MCF 10A (cell line): ENCODE measurements at regions of chr19 and their contacts with region 1.

Region 1: DNA sequence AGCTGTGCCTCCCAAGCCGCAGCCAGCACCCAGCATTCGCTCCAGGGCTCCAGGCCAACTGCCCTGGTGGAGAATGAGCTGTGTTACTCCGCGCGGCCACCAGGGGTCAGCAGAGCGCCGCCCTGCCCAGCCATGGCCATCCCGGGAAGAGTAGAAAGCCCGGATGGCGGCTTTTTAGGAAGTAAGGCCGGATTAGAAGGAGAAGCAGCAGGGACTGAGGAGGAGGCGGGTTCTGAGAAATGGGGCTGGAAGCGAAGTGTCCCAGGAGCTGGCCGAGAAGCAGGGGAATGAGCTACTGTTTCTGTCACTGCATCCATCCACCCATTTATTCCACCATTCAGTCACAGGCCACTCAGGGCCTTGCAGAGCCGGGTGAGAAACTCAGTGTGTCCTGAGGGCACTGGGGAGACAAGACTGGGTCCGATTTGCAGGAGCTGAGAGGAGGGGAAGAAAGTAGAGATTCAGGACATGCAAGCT is 6.6 kb upstream of the NPAS1 start:
- DNase-seq: peak; percentile 87
- H3K4me3 Mint-ChIP-seq: peak overlapping the region; percentile 45
- H3K27ac Mint-ChIP-seq: no peak overlapping the region
- H3K4me1 Mint-ChIP-seq: peaks cover 12% of the 10 kb centered on the region
- H3K27me3 Mint-ChIP-seq: no peaks in the 10 kb centered on the region
- CTCF ChIP-seq: peak; percentile 93

Region 2: GRCh38 chr19:47002107-47002766 is 10.8 kb before region 1 on chr19:
- CTCF ChIA-PET with region 1: interaction called, 25 read pairs
- POLR2A ChIA-PET with region 1: interaction called, 3 read pairs
- intact Hi-C with region 1: no loop called
- DNase-seq: no peak
- H3K4me3 Mint-ChIP-seq: no peak overlapping the region
- H3K27ac Mint-ChIP-seq: no peak overlapping the region
- H3K4me1 Mint-ChIP-seq: no peaks in the 10 kb centered on the region
- H3K27me3 Mint-ChIP-seq: no peaks in the 10 kb centered on the region
- CTCF ChIP-seq: no peak

Region 3: GRCh38 chr19:47035127-47036096 is 22.3 kb after region 1 on chr19:
- CTCF ChIA-PET with region 1: interaction called, 31 read pairs
- POLR2A ChIA-PET with region 1: interaction called, 9 read pairs
- intact Hi-C with region 1: loop called (anchors 1 kb)
- DNase-seq: peak; percentile 95
- H3K4me3 Mint-ChIP-seq: peak overlapping the region; percentile 74
- H3K27ac Mint-ChIP-seq: peak overlapping the region; percentile 94
- H3K4me1 Mint-ChIP-seq: peaks cover 8% of the 10 kb centered on the region
- H3K27me3 Mint-ChIP-seq: no peaks in the 10 kb centered on the region
- CTCF ChIP-seq: peak; percentile 91

Region 4: DNA sequence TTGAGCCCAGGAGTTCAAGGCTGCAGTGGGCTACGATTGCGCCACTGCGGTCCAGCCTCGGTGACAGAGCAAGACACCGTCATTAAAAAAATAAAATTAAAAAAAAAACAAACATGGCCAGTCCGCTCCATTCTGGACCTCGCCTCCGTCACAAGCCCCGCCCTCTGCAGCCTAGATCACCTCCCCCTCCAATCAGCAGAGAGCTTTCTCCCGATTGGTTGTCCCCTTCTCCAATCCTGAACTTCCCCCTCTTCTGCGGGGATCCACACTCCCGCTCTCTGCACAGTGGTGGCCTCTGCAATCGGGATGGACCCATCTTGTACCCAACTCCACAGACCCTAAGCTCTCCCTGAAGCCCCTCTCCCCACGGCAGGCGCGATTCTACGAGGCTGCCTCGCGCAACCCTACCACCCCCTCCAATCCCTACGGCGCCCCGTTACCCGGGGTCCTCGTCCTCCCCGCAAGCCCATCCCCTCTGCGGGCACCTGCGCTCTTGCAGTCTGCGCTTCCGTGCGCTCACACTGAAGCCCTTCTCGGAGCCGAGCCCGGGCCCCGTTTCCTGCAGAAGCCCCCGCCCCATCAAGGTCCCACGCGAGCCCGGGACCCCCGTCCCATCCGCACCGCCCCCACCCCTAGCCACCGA is 34.8 kb after region 1 on chr19:
- CTCF ChIA-PET with region 1: no interaction called
- POLR2A ChIA-PET with region 1: no interaction called
- intact Hi-C with region 1: no loop called
- DNase-seq: peak; percentile 79
- H3K4me3 Mint-ChIP-seq: peak overlapping the region; percentile 86
- H3K27ac Mint-ChIP-seq: no peak overlapping the region
- H3K4me1 Mint-ChIP-seq: peaks cover 6% of the 10 kb centered on the region
- H3K27me3 Mint-ChIP-seq: no peaks in the 10 kb centered on the region
- CTCF ChIP-seq: no peak

Region 5: DNA sequence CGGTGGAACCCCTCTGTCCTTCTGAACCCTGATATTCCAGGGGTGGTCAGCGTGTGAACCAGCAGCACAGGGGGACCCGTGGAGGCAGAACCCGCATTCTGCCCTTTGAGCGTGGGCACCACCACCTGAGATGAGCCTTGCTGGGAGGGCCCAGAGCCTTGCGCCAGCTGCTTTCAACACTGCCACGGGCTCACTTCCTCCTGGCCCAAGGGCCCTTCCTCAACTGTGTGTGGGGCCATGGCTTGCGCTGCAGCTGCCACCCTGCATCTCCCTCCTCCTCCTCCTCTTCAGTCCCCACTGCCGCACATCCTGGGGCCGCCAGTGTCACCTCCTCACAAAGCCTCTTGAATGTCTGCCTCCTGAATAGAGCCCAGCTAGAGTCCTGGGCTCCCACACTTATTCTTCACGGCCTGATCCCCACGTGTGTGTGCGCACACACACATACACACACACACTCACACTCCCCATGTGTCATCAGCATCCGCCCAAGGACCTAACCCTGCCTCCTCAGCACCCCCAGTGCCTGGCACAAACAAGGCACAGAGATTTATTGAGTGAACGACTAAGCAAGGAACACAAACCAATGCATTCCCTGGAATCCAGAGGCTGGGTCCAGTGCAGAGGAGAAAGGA is 62.2 kb after region 1 on chr19:
- CTCF ChIA-PET with region 1: interaction called, 7 read pairs
- POLR2A ChIA-PET with region 1: no interaction called
- intact Hi-C with region 1: loop called (anchors 5 kb)
- DNase-seq: no peak
- H3K4me3 Mint-ChIP-seq: no peak overlapping the region
- H3K27ac Mint-ChIP-seq: no peak overlapping the region
- H3K4me1 Mint-ChIP-seq: no peaks in the 10 kb centered on the region
- H3K27me3 Mint-ChIP-seq: no peaks in the 10 kb centered on the region
- CTCF ChIP-seq: no peak

Region 6: DNA sequence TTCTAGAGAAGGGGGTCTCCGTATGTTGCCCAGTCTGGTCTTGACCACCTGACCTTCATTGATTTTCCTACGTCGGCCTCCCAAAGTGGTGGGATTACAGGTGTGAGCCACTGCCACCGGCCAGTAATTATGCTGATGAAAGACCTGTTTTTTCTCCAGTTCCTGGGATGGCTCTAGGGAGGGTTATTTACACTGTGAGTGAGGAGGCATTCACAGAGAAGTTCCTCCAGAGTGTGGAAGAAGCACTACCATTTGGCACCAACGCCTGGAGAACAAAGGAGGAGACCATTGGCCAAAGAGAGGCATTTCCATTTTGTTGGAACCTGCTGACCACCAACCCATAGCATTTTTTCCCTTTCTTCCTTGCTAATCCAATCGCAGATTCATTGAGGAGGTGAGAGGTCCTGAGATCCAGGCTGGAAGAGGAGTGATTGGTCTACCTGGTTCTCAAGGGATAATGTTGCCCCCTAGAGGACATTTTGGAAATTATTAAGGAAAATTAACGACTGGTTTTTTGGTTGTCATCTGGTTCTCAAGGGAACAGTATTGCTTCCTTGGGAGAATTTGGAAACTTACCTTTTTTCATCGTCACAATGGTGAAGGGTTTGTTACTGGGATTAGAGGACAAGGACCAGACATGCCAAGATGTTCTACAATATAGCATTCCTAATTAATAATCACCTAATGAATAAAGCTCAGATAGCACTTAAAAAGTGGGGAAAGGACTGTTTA is 112.0 kb after region 1 on chr19:
- CTCF ChIA-PET with region 1: interaction called, 18 read pairs
- POLR2A ChIA-PET with region 1: interaction called, 4 read pairs
- intact Hi-C with region 1: loop called (anchors 1 kb)
- DNase-seq: peak; percentile 82
- H3K4me3 Mint-ChIP-seq: no peak overlapping the region
- H3K27ac Mint-ChIP-seq: no peak overlapping the region
- H3K4me1 Mint-ChIP-seq: peaks cover 23% of the 10 kb centered on the region
- H3K27me3 Mint-ChIP-seq: no peaks in the 10 kb centered on the region
- CTCF ChIP-seq: peak; percentile 69

Region 7: DNA sequence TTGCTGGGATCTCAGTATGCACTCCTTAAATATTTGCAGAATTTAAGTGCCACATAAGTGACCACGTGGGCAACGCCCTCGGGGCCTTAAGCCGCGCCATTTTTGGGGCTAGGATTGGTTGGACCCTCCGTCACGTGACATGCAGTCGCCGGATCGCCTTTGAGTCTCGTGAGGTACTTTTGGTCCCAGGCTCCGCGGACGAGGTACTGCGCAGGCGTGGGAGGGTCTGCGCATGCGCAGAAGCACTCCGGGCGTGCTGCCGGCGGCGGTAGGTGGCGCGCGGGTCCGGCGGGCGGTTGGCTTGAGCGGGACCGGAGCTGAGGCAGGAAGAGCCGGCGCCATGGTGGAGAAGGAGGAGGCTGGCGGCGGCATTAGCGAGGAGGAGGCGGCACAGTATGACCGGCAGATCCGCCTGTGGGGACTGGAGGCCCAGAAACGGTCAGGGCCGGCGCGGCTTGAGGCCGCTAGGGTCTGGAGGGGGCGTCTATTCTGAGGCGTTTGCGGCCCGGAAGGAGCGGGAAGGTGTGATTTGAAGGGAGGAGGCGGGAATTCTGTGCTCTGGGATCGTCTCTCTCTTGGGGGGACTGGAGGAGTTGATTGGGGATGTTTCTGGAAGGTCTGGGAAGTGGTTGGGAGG is 117.6 kb after region 1 on chr19 and contains the start of gene SAE1:
- CTCF ChIA-PET with region 1: interaction called, 18 read pairs
- POLR2A ChIA-PET with region 1: interaction called, 6 read pairs
- intact Hi-C with region 1: loop called (anchors 1 kb)
- DNase-seq: peak; percentile 98
- H3K4me3 Mint-ChIP-seq: peak within 1 kb of the TSS; percentile 99
- H3K27ac Mint-ChIP-seq: peak within 1 kb of the TSS; percentile 92
- H3K4me1 Mint-ChIP-seq: peaks cover 35% of the 10 kb centered on the region
- H3K27me3 Mint-ChIP-seq: no peaks in the 10 kb centered on the region
- CTCF ChIP-seq: peak; percentile 23
- total RNA-seq, gene SAE1: 76.1 and 81.7 TPM in 2 replicates

Region 8: GRCh38 chr19:47157431-47158321 is 144.6 kb after region 1 on chr19:
- CTCF ChIA-PET with region 1: interaction called, 10 read pairs
- POLR2A ChIA-PET with region 1: no interaction called
- intact Hi-C with region 1: no loop called
- DNase-seq: no peak
- H3K4me3 Mint-ChIP-seq: no peak overlapping the region
- H3K27ac Mint-ChIP-seq: peak overlapping the region; percentile 20
- H3K4me1 Mint-ChIP-seq: peaks cover 23% of the 10 kb centered on the region
- H3K27me3 Mint-ChIP-seq: no peaks in the 10 kb centered on the region
- CTCF ChIP-seq: no peak